GM18951 (cell line): ENCODE measurements at regions of chr12 and their contacts with region 1.

Region 1: DNA sequence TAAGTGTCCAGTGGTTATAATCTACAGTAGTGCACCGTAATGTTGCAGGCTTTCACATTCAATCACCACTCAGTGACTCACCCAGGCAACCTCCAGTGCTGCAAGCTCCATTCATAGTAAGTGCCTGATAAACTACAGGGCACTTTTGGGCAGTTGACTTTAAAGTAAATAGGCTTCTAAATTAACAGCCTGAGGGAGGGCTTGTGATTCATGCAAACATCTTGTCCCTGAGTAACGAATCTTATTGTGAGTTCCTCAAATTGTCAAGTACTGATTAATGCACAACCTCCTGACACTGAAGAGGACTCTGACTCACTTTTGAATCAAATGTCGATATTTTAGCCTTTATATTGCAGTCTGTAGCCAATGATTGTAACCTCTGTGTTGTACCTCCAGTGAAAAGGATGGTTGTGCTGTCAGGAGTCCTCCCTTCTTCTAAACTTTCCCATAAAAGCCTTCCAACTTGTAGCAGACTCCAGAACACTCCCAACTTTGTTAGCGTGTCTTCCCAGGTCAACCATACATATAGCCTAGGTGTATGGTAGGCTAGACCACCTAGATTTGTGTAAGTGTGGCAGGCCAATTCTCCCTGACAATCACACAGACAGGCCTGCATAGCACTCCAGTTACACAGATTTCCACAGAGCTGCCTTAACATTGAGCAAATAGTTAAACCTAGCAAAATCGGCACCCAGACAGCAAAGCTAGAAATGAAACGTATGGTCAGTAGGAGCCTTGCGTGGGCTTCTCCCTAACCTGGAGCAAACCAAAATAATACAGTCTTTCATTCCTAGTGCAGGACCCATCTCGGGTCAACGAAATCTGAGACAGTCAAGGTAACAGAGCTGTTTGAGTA is 54.9 kb upstream of the BICD1 start:
- POLR2A ChIP-seq: no peak

Region 2: DNA sequence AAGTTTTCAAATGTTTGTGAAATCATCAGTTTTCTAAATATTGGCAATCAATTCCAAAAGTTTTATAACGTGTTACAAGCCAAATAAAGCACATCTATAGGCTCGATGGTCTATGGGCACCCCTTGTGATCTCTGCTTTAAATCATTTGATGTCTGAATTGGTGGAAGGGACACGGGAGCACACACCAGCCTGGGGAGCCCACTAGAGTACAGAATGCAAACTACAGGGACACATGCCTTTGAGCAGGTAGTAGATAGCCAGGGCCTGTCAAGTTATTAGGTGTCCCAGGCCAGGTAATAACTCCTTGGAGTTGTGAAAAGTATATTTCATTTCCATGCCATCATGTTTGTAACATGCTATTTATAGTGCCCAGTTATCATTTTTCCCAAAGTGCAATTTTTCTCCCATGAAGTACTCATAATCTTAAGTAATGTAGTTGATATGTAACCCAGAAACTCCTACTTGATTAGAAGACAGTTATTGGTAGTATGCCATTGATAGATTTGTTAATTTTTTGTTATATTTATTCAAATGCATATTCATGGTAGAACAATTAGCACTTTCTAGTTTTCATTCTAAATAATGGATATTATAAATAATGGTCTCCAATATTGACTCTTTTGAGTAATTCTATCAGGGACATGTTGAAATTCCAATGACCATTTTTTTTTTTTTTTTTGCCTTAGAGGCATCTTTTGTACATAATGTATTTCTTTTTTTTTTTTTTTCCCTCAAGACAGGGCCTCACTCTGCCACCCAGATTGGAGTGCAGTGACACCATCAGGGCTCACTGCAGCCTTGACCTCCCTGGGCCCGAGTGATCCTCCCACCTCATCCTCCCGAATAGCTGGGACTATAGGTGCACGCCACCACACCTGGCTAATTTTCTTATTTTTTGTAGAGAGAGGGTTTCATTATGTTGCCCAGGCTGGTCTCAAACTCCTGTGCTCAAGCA is 250.7 kb after region 1 on chr12:
- in situ Hi-C with region 1: loop called (anchors 25 kb)
- POLR2A ChIP-seq: no peak